ENCODE measurements at regions of chr16 and their contacts with region 1.

Region 1: GRCh38 chr16:70470927-70471341 is 16.5 kb downstream of the FCSK start:
- DNase-seq: no peak
- H3K4me3 Mint-ChIP-seq: no peak overlapping the region
- H3K27ac Mint-ChIP-seq: no peak overlapping the region
- H3K4me1 Mint-ChIP-seq: peaks cover 4% of the 10 kb centered on the region
- H3K27me3 Mint-ChIP-seq: no peaks in the 10 kb centered on the region

Region 2: DNA sequence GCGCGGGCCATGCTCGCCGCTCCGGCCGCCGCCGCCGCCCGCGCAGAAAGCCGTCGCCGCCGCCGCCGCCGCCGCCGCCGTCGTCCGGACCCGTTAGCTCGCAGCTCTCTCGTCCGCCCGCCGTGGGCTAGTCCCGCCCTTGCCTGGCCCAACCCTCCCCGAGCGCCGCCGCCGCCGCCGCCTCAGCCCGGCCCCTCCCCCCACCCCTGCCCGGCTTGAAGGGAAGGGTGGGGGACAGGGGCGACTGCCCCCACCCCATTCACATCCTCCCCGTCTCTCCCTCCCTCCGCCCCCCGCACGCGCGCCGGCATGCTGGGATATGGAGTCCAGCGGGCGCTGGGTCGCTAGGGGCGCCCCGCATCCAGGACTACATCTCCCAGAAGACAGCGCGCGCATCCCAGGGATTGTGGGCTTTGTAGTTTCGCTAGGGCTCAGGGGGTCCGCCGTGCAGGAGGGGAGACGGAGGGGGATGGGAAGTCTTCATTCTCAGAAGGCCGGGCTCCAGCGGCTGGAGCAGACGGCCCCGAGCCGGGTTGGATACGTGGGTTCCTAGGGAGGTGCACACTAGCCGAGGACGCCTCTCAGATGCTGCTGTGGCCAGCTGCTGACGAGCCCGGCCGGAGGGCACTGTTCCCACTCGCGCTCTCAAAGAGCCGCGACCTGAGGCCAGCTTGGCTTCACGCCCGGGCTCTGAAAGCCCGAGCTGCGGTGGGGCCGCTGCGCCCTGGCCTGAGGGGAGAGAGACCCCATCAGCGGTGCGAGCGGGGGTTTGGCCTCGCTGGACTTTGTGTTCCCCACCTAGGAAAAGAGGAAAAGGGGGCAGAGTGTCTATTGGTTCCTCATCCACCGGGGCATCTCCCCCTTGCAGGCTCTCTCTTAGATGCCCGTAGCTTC is 31.7 kb before region 1 on chr16 and contains the start of gene ST3GAL2:
- intact Hi-C with region 1: loop called (anchors 1 kb)
- DNase-seq: peak; percentile 91
- H3K4me3 Mint-ChIP-seq: peak within 1 kb of the TSS; percentile 91
- H3K27ac Mint-ChIP-seq: peak within 1 kb of the TSS; percentile 89
- H3K4me1 Mint-ChIP-seq: peaks cover 21% of the 10 kb centered on the region
- H3K27me3 Mint-ChIP-seq: no peaks in the 10 kb centered on the region
- total RNA-seq, gene ST3GAL2: 33.0 and 35.1 TPM in 2 replicates

Region 3: GRCh38 chr16:70495425-70496182 is 24.7 kb after region 1 on chr16:
- intact Hi-C with region 1: loop called (anchors 1 kb)
- DNase-seq: no peak
- H3K4me3 Mint-ChIP-seq: no peak overlapping the region
- H3K27ac Mint-ChIP-seq: no peak overlapping the region
- H3K4me1 Mint-ChIP-seq: peaks cover 13% of the 10 kb centered on the region
- H3K27me3 Mint-ChIP-seq: no peaks in the 10 kb centered on the region